Activated T-helper 1 cell treated with anti-CD3 and anti-CD28 coated beads, Interleukin-12 subunit alpha, Interleukin-12 subunit beta, Interleukin-2, Interleukin-4 antibody, amounts not matched to agents 30 ng/mL and 10 ng/mL and 1 ng/mL, durations not matched to agents 14 hours and 24 hours and 36 hours (primary cell): ENCODE measurements at regions of chr2 and their contacts with region 1.

Region 1: GRCh38 chr2:11124503-11125068 is 30.7 kb upstream of the SLC66A3 start:
- DNase-seq: peak; percentile 24
- H3K4me3 Mint-ChIP-seq: no peak overlapping the region
- H3K27ac Mint-ChIP-seq: no peak overlapping the region
- H3K4me1 Mint-ChIP-seq: peaks cover 5% of the 10 kb centered on the region
- H3K27me3 Mint-ChIP-seq: peaks cover 9% of the 10 kb centered on the region

Region 2: GRCh38 chr2:10977003-10977402 is 147.6 kb before region 1 on chr2:
- intact Hi-C with region 1: loop called (anchors 10 kb)
- DNase-seq: no peak
- H3K4me3 Mint-ChIP-seq: no peak overlapping the region
- H3K27ac Mint-ChIP-seq: no peak overlapping the region
- H3K4me1 Mint-ChIP-seq: peaks cover 4% of the 10 kb centered on the region
- H3K27me3 Mint-ChIP-seq: peaks cover 15% of the 10 kb centered on the region

Region 3: DNA sequence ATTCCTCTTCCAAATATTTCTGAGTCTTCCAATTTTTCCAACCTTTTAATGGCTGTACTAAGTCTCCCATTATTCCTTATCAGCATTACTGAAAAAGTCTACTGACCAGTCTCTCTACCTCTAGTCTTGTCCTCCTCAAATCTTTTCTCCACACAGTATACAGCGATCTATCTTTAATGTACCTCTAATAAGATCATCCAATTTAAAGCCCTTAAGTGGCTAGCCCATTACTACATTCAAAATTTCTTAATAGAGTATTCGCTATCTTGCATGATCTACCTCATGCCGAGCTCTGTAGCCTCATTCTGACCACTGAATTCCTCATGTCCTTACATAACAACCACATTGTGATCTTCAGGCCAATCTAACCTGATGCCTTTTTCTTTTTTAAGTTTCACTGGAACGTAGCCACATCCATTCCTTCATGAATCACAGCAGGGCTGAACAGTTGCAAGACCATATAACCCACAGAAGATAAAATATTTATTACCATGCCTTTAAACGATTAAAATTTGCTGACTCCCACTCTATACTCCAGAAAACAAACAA is 88.6 kb after region 1 on chr2:
- intact Hi-C with region 1: no loop called
- DNase-seq: no peak
- H3K4me3 Mint-ChIP-seq: no peak overlapping the region
- H3K27ac Mint-ChIP-seq: no peak overlapping the region
- H3K4me1 Mint-ChIP-seq: no peaks in the 10 kb centered on the region
- H3K27me3 Mint-ChIP-seq: no peaks in the 10 kb centered on the region